ENCODE measurements at regions of chr20 and their contacts with region 1.

Region 1: DNA sequence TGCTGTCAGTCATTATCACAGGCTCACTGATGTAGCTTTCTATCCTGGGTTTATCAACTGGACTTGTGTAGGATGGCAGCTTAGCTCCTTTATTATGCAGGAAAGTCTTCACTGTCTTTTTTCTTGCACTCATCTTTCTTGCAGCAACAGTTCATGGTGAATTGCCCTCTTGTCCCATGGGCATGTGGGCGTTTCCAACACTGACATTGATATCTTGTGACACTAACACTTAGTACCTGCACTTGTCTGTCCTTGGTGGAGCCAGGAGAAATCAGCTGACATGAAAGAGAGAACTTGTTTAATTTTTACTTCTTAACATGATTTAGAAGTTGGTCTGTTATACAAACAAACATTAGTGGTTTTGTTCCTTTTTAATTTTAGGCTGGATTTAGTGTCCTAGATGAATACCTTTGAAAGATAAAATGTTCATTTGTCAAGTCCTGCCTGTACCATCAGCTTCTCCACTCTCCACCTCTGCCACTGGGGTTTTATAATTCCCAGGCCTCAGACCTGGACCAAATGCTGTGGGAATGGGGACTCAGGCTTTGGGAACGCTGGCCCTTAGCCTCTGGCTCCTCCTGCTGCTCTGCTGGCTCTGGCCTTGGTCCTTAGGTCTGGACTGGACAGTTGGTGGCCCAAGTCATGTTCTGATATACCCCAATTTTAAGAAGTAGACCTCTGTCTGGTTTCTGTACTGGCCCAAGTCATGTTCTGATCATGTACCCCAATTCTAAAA is 161.0 kb upstream of the LAMP5 start:
- DNase-seq: no peak
- ATAC-seq: peak; percentile 13

Region 2: GRCh38 chr20:9225879-9226278 is 127.5 kb before region 1 on chr20:
- intact Hi-C with region 1: loop called (anchors 5 kb)
- DNase-seq: no peak
- ATAC-seq: peak; percentile 45

Region 3: GRCh38 chr20:9258901-9259300 is 94.4 kb before region 1 on chr20:
- intact Hi-C with region 1: loop called (anchors 5 kb)
- DNase-seq: no peak
- ATAC-seq: no peak

Region 4: DNA sequence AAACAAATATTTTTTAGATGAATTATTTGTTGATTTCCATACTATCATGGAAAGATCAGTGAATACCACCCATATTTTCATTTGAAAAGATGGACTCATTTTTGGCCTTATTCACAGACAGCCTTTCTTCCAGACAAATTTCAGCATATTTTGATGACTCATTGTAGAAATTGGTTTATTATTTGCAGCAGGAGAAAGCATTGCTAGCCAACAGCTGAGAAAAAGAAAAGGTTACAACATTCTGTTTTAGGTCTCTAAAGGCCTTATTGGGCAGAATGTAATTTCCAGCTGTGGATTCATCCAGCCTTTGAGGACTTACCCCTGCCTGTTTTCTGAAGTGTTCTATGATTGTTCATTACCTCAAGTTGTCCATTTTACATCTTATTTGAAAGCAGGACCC is 82.5 kb before region 1 on chr20:
- intact Hi-C with region 1: no loop called
- DNase-seq: no peak
- ATAC-seq: peak; percentile 71

Region 5: GRCh38 chr20:9427430-9428291 is 74.3 kb after region 1 on chr20:
- intact Hi-C with region 1: no loop called
- DNase-seq: no peak
- ATAC-seq: no peak

Region 6: DNA sequence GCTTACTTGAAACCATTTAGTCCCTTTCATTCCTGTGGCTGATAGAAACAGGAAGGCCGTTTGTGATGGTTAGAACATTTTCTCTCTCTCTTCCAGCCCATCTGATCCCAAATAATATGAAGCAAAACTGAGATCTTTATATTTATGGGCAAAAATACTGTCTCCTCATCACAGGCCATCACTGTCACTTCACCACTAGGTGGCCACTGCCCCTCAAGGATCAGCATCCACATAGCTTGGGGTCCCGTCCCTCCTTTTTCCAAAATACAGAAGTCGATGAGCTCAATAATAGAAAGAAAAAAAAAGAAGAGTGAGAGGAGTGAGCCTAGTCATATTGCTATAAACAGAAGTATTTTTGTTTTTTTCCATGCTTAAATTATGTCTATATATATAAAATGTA is 114.6 kb after region 1 on chr20:
- intact Hi-C with region 1: no loop called
- DNase-seq: no peak
- ATAC-seq: no peak

Region 7: GRCh38 chr20:9668381-9668780 is 315.0 kb after region 1 on chr20:
- intact Hi-C with region 1: no loop called
- DNase-seq: no peak
- ATAC-seq: no peak